Common myeloid progenitor, CD34-positive (primary cell): ENCODE measurements at regions of chr1 and their contacts with region 1.

Region 1: DNA sequence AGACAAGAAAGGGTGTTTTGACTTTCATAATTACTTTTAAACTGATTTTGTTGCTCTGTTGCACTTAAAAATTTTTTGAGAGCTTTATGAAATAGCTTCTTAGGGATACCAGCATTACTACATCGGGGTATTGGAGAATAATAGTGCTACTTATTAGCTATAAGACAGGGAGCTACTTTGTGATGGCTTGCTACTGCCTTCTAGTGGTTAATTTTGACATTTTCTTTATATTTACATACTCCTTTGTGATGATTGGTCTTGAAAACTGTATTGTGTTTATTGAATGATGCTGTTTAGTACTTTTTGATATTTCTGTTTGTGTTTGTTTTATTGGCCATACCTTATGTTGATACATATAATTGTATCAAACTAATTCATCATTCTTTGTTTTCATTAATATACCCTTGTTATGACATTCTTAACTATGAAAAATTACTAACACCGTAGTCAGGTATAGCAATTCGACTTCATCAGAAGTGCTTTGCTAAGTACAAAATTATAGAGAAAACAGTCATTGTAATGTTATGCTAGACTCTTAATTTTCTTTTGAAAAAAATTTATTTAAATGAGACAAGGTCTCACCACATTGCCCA is 85.5 kb downstream of the CLIC4 start:
- DNase-seq: peak; percentile 70 to 85 (median 80)
- H3K4me3 ChIP-seq: no peak overlapping the region
- H3K27ac ChIP-seq: no peak overlapping the region
- H3K4me1 ChIP-seq: peaks cover 0 to 5% (median 3%) of the 10 kb centered on the region in 4 experiments
- H3K27me3 ChIP-seq: no peaks in the 10 kb centered on the region

Region 2: GRCh38 chr1:24694380-24694843 is 136.4 kb before region 1 on chr1:
- CTCF ChIA-PET with region 1: interaction called, 189 read pairs
- POLR2A ChIA-PET with region 1: interaction called, 5 read pairs
- DNase-seq: peak in 2 of 3 donors; percentile 14 to 46
- H3K4me3 ChIP-seq: no peak overlapping the region
- H3K27ac ChIP-seq: no peak overlapping the region
- H3K4me1 ChIP-seq: peaks cover 2 to 24% (median 17%) of the 10 kb centered on the region in 4 experiments
- H3K27me3 ChIP-seq: no peaks in the 10 kb centered on the region

Region 3: GRCh38 chr1:24721533-24721932 is 109.2 kb before region 1 on chr1:
- CTCF ChIA-PET with region 1: interaction called, 11 read pairs
- POLR2A ChIA-PET with region 1: no interaction called
- DNase-seq: no peak
- H3K4me3 ChIP-seq: no peak overlapping the region
- H3K27ac ChIP-seq: no peak overlapping the region
- H3K4me1 ChIP-seq: peaks cover 0 to 12% (median 9%) of the 10 kb centered on the region in 4 experiments
- H3K27me3 ChIP-seq: no peaks in the 10 kb centered on the region

Region 4: GRCh38 chr1:25223471-25223870 is 392.7 kb after region 1 on chr1:
- CTCF ChIA-PET with region 1: no interaction called
- POLR2A ChIA-PET with region 1: interaction called, 13 read pairs
- DNase-seq: no peak
- H3K4me3 ChIP-seq: no peak overlapping the region
- H3K27ac ChIP-seq: no peak overlapping the region
- H3K4me1 ChIP-seq: no peaks in the 10 kb centered on the region
- H3K27me3 ChIP-seq: no peaks in the 10 kb centered on the region